Activated T-helper 1 cell treated with anti-CD3 and anti-CD28 coated beads, Interleukin-12 subunit alpha, Interleukin-12 subunit beta, Interleukin-2, Interleukin-4 antibody, amounts not matched to agents 30 ng/mL and 10 ng/mL and 1 ng/mL, durations not matched to agents 14 hours and 24 hours and 36 hours (primary cell): ENCODE measurements at regions of chr7 and their contacts with region 1.

Region 1: GRCh38 chr7:135558337-135558767 is 635 bp downstream of the NUP205 start:
- DNase-seq: peak; percentile 60
- H3K4me3 Mint-ChIP-seq: no peak overlapping the region
- H3K27ac Mint-ChIP-seq: no peak overlapping the region
- H3K4me1 Mint-ChIP-seq: peaks cover 16% of the 10 kb centered on the region
- H3K27me3 Mint-ChIP-seq: no peaks in the 10 kb centered on the region

Region 2: DNA sequence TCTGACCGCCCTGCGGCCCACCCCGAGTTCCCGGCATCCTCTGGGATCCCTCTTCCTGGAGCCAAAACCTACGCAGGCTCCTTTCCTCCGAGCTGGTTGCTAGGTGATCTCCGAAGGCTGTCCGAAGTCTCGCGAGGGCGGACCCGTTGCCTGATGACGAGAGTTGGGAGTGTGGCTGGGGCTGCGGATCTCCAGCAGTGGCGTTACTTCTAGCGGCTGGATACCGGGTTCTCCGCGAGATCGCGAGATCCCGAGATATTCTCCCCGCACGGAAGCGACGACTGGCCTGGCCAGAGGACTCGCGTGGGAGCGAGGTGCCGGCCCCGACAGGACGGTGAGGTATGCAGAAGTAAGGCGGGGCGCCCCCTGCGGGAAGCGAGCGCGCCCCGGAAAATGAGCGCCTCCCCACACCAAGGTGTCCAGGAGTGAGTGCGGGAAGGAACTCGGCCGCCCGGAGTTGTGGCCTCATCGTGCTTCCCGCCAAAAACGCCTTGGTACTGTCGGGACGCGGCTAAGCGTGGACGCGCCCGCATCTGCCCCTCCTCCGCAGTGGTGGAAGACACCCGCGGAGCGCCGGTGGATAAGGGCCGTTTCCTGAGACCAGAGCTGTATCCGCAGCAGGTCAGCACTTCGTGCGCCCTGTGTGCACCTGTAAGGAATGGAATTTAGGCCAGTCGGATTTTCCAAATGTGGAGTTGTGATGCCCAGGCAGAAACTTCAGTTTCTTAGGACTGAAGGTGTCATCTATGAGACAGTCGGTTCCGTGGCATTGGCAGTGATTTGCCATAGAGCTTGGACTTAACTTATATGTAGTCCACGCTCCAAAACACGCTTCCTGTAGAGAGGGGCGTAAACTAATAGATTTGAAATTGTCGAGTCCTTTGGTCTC is 571.7 kb before region 1 on chr7 and contains the start of gene AGBL3:
- intact Hi-C with region 1: loop called (anchors 1 kb)
- DNase-seq: peak; percentile 87
- H3K4me3 Mint-ChIP-seq: peak within 1 kb of the TSS; percentile 97
- H3K27ac Mint-ChIP-seq: peak within 1 kb of the TSS; percentile 86
- H3K4me1 Mint-ChIP-seq: peaks cover 49% of the 10 kb centered on the region
- H3K27me3 Mint-ChIP-seq: no peaks in the 10 kb centered on the region
- total RNA-seq, gene AGBL3: 1.5 and 1.9 TPM in 2 replicates

Region 3: GRCh38 chr7:135211179-135211945 is 347.0 kb before region 1 on chr7 and contains the start of gene WDR91:
- intact Hi-C with region 1: loop called (anchors 1 kb)
- DNase-seq: peak; percentile 86
- H3K4me3 Mint-ChIP-seq: peak within 1 kb of the TSS; percentile 96
- H3K27ac Mint-ChIP-seq: peak within 1 kb of the TSS; percentile 98
- H3K4me1 Mint-ChIP-seq: peaks cover 47% of the 10 kb centered on the region
- H3K27me3 Mint-ChIP-seq: no peaks in the 10 kb centered on the region
- total RNA-seq, gene WDR91: 34.6 and 35.4 TPM in 2 replicates

Region 4: DNA sequence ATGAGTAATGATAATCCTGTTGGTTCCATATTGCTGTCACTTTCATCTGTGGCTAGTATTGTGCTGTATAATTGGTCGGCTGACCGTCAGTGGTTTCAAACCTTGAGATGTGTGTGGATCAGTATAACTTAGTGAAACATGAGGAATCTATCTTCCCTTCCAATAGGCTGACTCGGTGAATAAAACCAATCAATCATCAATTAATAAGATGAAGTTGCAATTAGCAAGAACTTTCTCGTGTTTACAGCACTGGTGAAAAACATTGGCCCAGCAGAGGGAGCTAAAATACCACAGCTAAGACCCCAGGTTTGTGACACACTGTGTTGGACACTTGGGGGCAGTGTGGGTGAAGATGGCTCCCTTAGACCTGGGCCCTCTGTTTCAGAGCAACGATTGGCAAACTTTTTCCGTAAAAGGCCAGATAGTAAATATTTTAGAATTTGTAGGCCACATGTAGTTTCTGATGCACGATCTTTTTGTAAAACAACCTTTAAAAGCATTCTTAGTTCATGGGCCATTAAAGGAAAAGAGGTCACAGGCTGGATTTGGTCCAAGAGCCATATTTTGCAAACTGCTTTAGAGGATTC is 276.9 kb before region 1 on chr7:
- intact Hi-C with region 1: loop called (anchors 1 kb)
- DNase-seq: peak; percentile 65
- H3K4me3 Mint-ChIP-seq: no peak overlapping the region
- H3K27ac Mint-ChIP-seq: no peak overlapping the region
- H3K4me1 Mint-ChIP-seq: peaks cover 16% of the 10 kb centered on the region
- H3K27me3 Mint-ChIP-seq: peaks cover 10% of the 10 kb centered on the region

Region 5: DNA sequence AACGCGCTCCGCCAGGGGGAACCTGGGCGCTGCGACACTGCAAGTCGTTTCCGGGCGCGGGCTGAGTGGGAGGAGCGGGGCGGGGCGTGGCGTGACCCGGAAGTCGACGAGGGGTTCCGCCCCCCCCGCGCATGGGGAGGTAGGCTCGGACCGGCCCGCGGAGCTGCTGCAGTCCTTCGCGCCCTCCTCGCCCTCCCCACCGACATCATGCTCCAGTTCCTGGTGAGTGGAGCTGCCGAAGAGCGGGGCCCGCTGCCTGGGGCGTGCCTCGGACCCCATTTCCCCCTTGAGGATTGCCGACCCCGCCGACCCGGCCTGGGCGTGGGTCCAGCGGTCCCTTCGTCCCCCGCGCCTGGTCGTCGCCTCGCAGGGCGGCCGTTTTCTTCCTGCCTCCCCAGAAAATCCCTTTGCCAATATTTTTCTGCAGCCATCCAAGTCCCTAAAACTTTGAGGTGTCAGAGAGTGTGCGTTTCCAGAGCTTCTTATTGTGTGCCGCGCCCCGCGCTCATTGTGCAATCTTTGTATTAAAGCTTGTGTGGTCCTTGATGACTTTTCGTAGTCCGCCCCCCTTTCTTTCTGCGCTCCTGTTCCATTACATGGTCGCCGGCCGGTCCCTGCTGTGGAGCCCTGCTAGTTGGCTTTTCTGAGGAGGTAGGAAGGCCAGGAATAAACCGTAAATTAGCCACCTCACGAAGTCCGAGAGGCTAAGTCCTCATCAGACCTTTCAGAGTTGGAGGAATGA is 104.2 kb after region 1 on chr7 and contains the start of gene STMP1:
- intact Hi-C with region 1: loop called (anchors 1 kb)
- DNase-seq: peak; percentile 93
- H3K4me3 Mint-ChIP-seq: peak within 1 kb of the TSS; percentile 97
- H3K27ac Mint-ChIP-seq: peak within 1 kb of the TSS; percentile 93
- H3K4me1 Mint-ChIP-seq: peaks cover 22% of the 10 kb centered on the region
- H3K27me3 Mint-ChIP-seq: no peaks in the 10 kb centered on the region
- total RNA-seq, gene STMP1: 22.7 and 24.7 TPM in 2 replicates